ENCODE measurements at regions of chr1 and their contacts with region 1.

Region 1: DNA sequence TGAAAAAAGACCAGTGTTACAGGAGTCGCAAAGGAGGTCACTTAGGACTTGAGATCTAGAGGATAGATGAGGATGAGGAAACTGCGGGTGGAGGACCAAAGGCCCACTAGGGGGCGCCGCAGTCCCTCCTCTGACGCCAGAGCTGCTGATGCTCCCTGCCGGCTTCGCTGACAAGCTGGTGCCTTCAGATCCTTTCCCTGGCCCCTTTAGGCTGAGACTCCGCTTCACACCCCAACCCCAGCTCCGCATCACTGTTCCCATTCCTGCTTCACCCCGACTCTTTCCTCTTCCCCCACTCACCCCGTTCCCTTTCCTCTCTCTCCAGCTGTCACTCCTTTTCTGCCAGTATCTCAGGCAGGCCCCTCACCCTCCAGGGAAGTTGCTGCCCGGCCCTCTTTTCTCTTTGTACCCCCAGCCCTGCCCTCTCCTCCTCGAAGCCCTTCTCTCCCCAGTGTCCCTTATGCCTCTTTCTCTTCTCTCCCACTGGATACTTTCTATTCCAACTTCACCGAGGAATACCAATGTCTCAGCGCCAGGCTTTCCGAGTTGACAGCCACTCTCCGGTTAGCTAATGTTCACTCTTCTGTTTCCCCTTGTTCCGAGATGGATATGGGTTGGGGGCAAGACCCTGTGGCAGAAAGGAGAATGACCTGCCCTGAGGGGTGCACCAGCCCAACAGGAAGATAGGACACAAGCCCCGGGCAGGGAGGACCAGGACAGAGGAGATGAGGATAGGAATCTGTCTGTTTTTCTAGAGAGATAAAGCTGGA is 4.5 kb downstream of the KCNJ9 start:
- DNase-seq: peak; percentile 94
- ATAC-seq: peak; percentile 74
- H3K4me3 Mint-ChIP-seq: no peak overlapping the region
- H3K27ac Mint-ChIP-seq: no peak overlapping the region
- H3K4me1 Mint-ChIP-seq: peaks cover 19% of the 10 kb centered on the region
- H3K27me3 Mint-ChIP-seq: peaks cover 51% of the 10 kb centered on the region
- CTCF ChIP-seq: peak; percentile 92

Region 2: GRCh38 chr1:159598196-159598595 is 487.7 kb before region 1 on chr1:
- CTCF ChIA-PET with region 1: no interaction called
- POLR2A ChIA-PET with region 1: no interaction called
- DNase-seq: no peak
- ATAC-seq: no peak; the same call in 1 of the 2 replicates
- H3K4me3 Mint-ChIP-seq: no peak overlapping the region
- H3K27ac Mint-ChIP-seq: peak overlapping the region; percentile 1; the same call in 1 of the 2 replicates
- H3K4me1 Mint-ChIP-seq: 0 out of 2 replicates have a peak, but pooled peaks cover 3% of the 10 kb centered on the region
- H3K27me3 Mint-ChIP-seq: 0 out of 2 replicates have a peak, but pooled peaks cover 2% of the 10 kb centered on the region
- CTCF ChIP-seq: no peak

Region 3: DNA sequence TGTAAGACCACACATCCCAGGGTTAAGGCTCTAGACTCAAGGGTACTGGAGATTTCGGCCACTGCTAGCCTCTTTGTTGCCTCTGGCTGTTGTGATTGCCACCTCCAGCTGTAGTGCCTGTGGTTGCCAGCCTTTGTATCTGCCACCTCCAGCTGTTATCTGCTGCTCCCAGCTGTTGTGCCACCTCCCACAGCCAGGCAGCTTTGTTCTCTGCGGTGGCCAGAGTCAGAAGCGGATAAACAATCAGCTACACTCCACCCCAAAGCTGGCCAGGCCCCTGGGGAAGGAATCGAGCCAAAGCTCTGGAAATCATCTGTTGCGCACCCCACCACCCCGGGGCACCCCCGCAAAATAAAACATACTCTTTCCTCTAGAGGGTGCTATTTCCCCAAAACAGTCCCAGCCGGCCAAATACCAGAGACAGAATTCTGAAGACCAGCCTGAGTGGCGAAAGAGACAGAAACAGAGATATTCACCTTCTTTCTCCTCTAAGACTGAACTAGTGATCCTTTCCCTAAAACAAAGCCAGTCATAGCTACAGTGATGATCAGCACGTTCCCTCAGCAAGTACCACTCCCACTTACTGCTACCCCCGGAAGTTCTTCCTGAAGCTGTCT is 39.3 kb before region 1 on chr1:
- CTCF ChIA-PET with region 1: interaction called, 978 read pairs
- POLR2A ChIA-PET with region 1: no interaction called
- DNase-seq: peak; percentile 61
- ATAC-seq: peak; percentile 88
- H3K4me3 Mint-ChIP-seq: peak overlapping the region; percentile 26; the same call in 1 of the 2 replicates
- H3K27ac Mint-ChIP-seq: no peak overlapping the region
- H3K4me1 Mint-ChIP-seq: peaks cover 30% of the 10 kb centered on the region
- H3K27me3 Mint-ChIP-seq: peaks cover 7% of the 10 kb centered on the region
- CTCF ChIP-seq: peak; percentile 57; the same call in 1 of the 2 replicates

Region 4: DNA sequence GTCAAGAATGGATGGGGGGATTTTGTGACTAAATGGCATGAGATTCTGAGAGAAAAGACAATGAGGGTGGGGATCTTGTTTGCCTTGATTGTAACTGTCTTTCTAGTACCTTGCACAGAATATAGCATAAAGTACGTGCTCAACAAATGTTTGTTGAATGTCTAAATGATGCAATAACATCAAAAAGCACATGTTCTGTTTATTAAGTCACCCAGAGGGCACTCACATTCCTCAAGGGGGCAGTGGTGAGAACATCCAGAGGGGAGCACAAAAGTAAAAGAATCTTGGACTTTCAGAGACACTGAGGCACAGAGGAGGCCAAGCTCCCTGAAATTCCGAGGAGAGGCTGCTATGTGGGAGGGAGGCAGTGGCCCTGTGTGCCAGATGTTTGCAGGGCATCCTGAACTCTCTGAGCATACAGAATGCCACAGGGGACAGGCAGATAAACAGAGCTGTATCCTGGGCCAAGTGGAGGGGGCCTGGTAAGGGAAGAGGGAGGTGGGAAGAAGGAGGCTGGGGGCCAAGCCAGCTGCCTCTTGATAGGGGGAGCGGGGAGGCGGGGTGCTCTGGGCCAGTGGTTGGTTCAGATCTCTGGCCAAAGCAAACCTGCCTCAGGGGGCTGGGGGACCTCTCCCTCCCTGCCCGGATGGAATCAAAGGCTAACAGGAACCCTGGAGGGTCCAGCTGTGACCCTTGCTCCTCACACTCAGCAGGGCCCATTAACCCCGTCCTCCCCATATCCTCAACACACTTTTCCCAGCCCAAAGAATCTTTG is 23.2 kb after region 1 on chr1:
- CTCF ChIA-PET with region 1: interaction called, 39 read pairs
- POLR2A ChIA-PET with region 1: no interaction called
- DNase-seq: no peak
- ATAC-seq: peak; percentile 61
- H3K4me3 Mint-ChIP-seq: no peak overlapping the region; the same call in 1 of the 2 replicates
- H3K27ac Mint-ChIP-seq: peak overlapping the region; percentile 30
- H3K4me1 Mint-ChIP-seq: peaks cover 50% of the 10 kb centered on the region
- H3K27me3 Mint-ChIP-seq: peaks cover 5% of the 10 kb centered on the region; the same call in 1 of the 2 replicates
- CTCF ChIP-seq: peak; percentile 33; the same call in 1 of the 2 replicates

Region 5: GRCh38 chr1:160161965-160162705 is 76.3 kb after region 1 on chr1:
- CTCF ChIA-PET with region 1: interaction called, 29 read pairs
- POLR2A ChIA-PET with region 1: no interaction called
- DNase-seq: peak; percentile 78
- ATAC-seq: peak; percentile 98
- H3K4me3 Mint-ChIP-seq: no peak overlapping the region
- H3K27ac Mint-ChIP-seq: no peak overlapping the region
- H3K4me1 Mint-ChIP-seq: peaks cover 20% of the 10 kb centered on the region
- H3K27me3 Mint-ChIP-seq: peaks cover 14% of the 10 kb centered on the region
- CTCF ChIP-seq: peak; percentile 59

Region 6: GRCh38 chr1:160219062-160219929 is 133.4 kb after region 1 on chr1:
- CTCF ChIA-PET with region 1: interaction called, 30 read pairs
- POLR2A ChIA-PET with region 1: no interaction called
- DNase-seq: peak; percentile 69
- ATAC-seq: peak; percentile 87
- H3K4me3 Mint-ChIP-seq: no peak overlapping the region
- H3K27ac Mint-ChIP-seq: peak overlapping the region; percentile 79
- H3K4me1 Mint-ChIP-seq: peaks cover 15% of the 10 kb centered on the region
- H3K27me3 Mint-ChIP-seq: no peaks in the 10 kb centered on the region
- CTCF ChIP-seq: no peak

Measured in WTC11 (cell line).